Panc1 (cell line): ENCODE measurements at regions of chr11 and their contacts with region 1.

Region 1: GRCh38 chr11:34395916-34396550 is 38.2 kb upstream of the ABTB2 start:
- DNase-seq: no peak
- ATAC-seq: peak; percentile 95
- H3K4me3 ChIP-seq: no peak overlapping the region
- H3K27ac ChIP-seq: peak overlapping the region; percentile 48; the same call in 1 of the 2 replicates
- H3K4me1 ChIP-seq: no peaks in the 10 kb centered on the region
- H3K27me3 ChIP-seq: no peaks in the 10 kb centered on the region
- CTCF ChIP-seq: no peak

Region 2: DNA sequence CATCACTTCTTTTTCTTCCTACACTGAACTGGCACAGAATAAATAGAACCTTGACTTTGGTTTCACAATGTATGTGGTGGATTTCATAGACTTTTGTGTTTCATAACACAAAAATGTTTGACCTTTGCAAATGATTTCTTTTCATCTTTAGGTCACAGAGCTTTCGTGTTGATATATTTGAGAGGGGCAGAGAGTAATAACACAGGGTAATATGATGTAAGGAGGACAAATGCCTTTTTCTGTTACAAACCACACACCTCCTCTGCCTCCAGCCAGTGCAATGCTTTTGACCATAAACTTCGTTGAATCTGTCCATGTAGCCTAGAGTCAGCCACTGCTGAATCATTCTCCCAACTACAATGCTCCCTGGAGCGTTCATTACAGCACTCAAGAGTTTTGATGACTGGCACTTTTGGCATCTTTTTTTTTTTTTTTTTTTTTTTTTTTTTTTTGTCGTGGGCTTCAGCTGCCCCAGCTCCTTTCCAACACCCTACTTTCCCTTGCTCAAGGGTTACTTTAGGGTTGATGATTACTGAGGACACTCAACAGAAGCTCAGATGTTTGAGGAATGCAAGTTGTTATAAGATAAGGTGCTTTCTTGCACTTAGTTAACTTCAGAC is 31.3 kb after region 1 on chr11:
- CTCF ChIA-PET with region 1: no interaction called
- POLR2A ChIA-PET with region 1: interaction called, 11 read pairs
- in situ Hi-C with region 1: no loop called
- intact Hi-C with region 1: no loop called
- DNase-seq: no peak
- ATAC-seq: peak; percentile 88
- H3K4me3 ChIP-seq: no peak overlapping the region
- H3K27ac ChIP-seq: peak overlapping the region; percentile 39; the same call in 1 of the 2 replicates
- H3K4me1 ChIP-seq: peaks cover 6% of the 10 kb centered on the region
- H3K27me3 ChIP-seq: no peaks in the 10 kb centered on the region
- CTCF ChIP-seq: no peak